ENCODE measurements at regions of chr11 and their contacts with region 1.

Region 1: DNA sequence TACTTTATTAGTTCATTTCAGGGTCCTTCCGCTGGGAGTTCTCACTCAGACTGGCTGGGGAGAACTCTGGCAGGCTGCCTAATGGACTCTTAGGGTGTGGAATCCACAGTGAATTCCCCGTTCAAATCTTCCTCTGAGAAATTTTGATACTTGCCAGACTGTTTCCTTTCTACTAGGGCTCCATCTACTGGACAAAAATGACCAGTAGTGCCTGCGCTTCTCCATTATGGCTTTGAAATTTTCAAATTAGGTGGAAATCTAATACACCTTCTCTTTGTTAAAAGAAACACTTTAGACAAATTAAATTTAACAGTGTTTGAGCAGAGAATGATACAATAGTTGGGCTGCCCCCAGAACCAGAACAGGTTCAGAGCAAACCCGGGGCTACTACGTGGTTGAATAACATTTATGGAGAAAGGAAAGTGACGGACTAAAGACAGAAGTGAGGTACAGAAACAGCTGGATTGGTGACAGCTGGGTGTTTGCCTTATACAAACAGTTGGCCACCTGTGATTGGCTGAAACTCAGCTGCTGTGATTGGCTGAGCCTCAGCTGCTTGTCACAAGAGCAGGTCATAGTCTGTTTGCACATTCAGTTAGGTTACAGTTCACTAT is 52.9 kb upstream of the FDX1 start:
- DNase-seq: peak; percentile 91
- ATAC-seq: peak; percentile 99
- H3K4me3 ChIP-seq: peak overlapping the region; percentile 6 to 54 (median 23); a peak in 3 of 6 replicates
- H3K27ac ChIP-seq: peak overlapping the region; percentile 27
- H3K4me1 ChIP-seq: peaks cover 13% of the 10 kb centered on the region
- H3K27me3 ChIP-seq: no peaks in the 10 kb centered on the region; a peak in 1 of 5 replicates
- CTCF ChIP-seq: peak; percentile 72
- EP300 ChIP-seq: no peak
- POLR2A ChIP-seq: no peak
- RAD21 ChIP-seq: peak; percentile 68

Region 2: DNA sequence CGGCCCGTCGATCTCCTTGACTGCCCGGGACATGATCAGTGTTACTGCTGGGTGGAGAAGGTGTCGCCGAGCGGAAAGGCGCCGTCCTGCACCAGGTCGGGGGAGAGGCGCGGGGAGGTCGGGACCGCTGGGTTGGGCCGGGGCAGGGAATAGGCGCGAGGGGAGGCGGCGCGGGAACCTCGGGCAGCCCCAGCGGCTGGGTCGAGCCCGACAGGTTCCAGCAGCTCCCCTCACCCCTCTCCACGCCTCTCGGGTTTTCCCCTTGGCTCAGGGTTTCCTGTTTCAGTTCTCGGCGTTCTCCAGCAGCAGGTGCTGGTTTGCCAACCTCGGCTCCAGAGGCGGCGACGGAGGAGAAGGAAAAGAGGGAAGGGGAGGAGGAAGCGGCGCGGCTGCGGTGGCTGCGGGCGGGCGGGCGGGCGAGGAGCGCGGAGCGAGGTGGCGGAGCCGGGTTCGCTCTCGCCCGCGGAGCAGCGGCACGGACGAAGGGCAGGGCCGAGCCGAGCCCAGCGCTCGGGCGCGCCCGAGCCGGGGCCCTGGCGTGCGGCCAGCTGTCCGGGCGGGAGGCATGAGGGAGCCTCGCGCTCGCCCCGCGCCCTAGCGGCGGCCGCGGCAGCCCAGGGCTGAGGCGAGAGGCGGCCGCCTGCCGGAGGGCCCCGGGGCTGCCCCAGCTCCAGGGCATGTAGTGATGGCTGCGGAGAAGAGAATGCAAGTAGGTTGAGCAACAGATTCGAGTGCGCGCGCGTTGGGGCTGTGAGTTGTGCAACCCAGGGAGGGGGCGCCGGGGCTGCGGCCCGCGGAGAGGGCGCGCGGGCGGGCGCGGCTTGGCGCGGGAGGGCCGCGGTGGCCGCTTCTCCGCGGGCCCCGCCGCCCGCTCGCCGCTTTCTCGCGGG is 284.1 kb before region 1 on chr11 and contains the start of gene ZC3H12C:
- CTCF ChIA-PET with region 1: no interaction called
- POLR2A ChIA-PET with region 1: no interaction called
- in situ Hi-C with region 1: no loop called
- intact Hi-C with region 1: loop called (anchors 10 kb)
- DNase-seq: peak; percentile 84
- ATAC-seq: peak; percentile 92
- H3K4me3 ChIP-seq: peak within 1 kb of the TSS; percentile 68 to 89 (median 80)
- H3K27ac ChIP-seq: peak within 1 kb of the TSS; percentile 87
- H3K4me1 ChIP-seq: peaks cover 27% of the 10 kb centered on the region
- H3K27me3 ChIP-seq: peaks cover 2 to 18% of the 10 kb centered on the region in 2 experiments; a peak in 3 of 5 replicates
- CTCF ChIP-seq: peak; percentile 52
- EP300 ChIP-seq: no peak
- POLR2A ChIP-seq: peak; percentile 62 to 63
- RAD21 ChIP-seq: peak; percentile 65
- total RNA-seq, gene ZC3H12C: 5.7 and 6.8 TPM in 2 replicates

Region 3: GRCh38 chr11:110199184-110199941 is 177.5 kb before region 1 on chr11:
- CTCF ChIA-PET with region 1: interaction called, 35 read pairs
- POLR2A ChIA-PET with region 1: interaction called, 3 read pairs
- in situ Hi-C with region 1: loop called (anchors 5 kb)
- intact Hi-C with region 1: loop called (anchors 1 kb)
- DNase-seq: peak; percentile 20
- ATAC-seq: peak; percentile 53; the same call in 2 of the 3 replicates
- H3K4me3 ChIP-seq: no peak overlapping the region
- H3K27ac ChIP-seq: no peak overlapping the region
- H3K4me1 ChIP-seq: no peaks in the 10 kb centered on the region
- H3K27me3 ChIP-seq: no peaks in the 10 kb centered on the region
- CTCF ChIP-seq: no peak
- EP300 ChIP-seq: no peak
- POLR2A ChIP-seq: no peak
- RAD21 ChIP-seq: no peak

Region 4: GRCh38 chr11:110296226-110297075 is 80.4 kb before region 1 on chr11 and contains the start of gene RDX:
- CTCF ChIA-PET with region 1: no interaction called
- POLR2A ChIA-PET with region 1: no interaction called
- in situ Hi-C with region 1: no loop called
- intact Hi-C with region 1: loop called (anchors 5 kb)
- DNase-seq: peak; percentile 52
- ATAC-seq: peak; percentile 76
- H3K4me3 ChIP-seq: peak within 1 kb of the TSS; percentile 79 to 92 (median 91)
- H3K27ac ChIP-seq: peak within 1 kb of the TSS; percentile 79
- H3K4me1 ChIP-seq: peaks cover 60% of the 10 kb centered on the region
- H3K27me3 ChIP-seq: no peaks in the 10 kb centered on the region
- CTCF ChIP-seq: no peak
- EP300 ChIP-seq: no peak
- POLR2A ChIP-seq: peak; percentile 50 to 75; a peak in 3 of 4 replicates
- RAD21 ChIP-seq: no peak
- total RNA-seq, gene RDX: 63.1 and 93.4 TPM in 2 replicates

Measured in HepG2 (cell line).